Mammary epithelial cell (primary cell): ENCODE measurements at regions of chr2 and their contacts with region 1.

Region 1: GRCh38 chr2:202375609-202376408 is at the start of gene BMPR2:
- DNase-seq: peak; percentile 88
- H3K4me3 ChIP-seq: peak within 1 kb of the TSS; percentile 89 to 97 (median 92)
- H3K27ac ChIP-seq: peak within 1 kb of the TSS; percentile 89
- H3K4me1 ChIP-seq: peaks cover 15% of the 10 kb centered on the region
- H3K27me3 ChIP-seq: no peaks in the 10 kb centered on the region
- CTCF ChIP-seq: no peak
- total RNA-seq, gene BMPR2: 46.5 to 56.0 TPM

Region 2: DNA sequence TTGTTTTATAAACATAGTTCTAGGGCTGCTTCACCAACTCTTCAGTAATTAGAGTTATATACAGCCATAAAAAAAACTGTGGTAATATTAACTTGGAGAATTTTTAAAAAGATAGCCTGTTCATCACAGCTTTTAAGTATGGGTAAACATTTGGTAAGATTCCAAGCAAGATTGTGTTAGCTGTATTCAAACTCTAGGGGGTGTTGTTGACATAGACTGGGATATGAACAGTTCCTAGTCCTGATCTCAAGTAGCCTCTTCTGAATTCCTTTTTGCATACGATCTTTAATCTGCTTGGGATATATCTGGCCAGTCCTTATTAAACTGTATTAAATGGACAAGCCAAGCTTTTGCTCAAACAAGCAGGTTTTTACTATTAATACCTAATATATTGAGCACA is 96.9 kb before region 1 on chr2:
- CTCF ChIA-PET with region 1: no interaction called
- dilution Hi-C with region 1: no loop called
- in situ Hi-C with region 1: no loop called
- intact Hi-C with region 1: loop called (anchors 5 kb)
- DNase-seq: peak; percentile 41
- H3K4me3 ChIP-seq: no peak overlapping the region
- H3K27ac ChIP-seq: peak overlapping the region; percentile 75
- H3K4me1 ChIP-seq: peaks cover 28% of the 10 kb centered on the region
- H3K27me3 ChIP-seq: no peaks in the 10 kb centered on the region
- CTCF ChIP-seq: peak; percentile 52 to 66

Region 3: GRCh38 chr2:202317080-202317857 is 58.5 kb before region 1 on chr2:
- CTCF ChIA-PET with region 1: no interaction called
- dilution Hi-C with region 1: no loop called
- in situ Hi-C with region 1: no loop called
- intact Hi-C with region 1: loop called (anchors 5 kb)
- DNase-seq: peak; percentile 58
- H3K4me3 ChIP-seq: no peak overlapping the region
- H3K27ac ChIP-seq: no peak overlapping the region
- H3K4me1 ChIP-seq: peaks cover 10% of the 10 kb centered on the region
- H3K27me3 ChIP-seq: no peaks in the 10 kb centered on the region
- CTCF ChIP-seq: no peak

Region 4: DNA sequence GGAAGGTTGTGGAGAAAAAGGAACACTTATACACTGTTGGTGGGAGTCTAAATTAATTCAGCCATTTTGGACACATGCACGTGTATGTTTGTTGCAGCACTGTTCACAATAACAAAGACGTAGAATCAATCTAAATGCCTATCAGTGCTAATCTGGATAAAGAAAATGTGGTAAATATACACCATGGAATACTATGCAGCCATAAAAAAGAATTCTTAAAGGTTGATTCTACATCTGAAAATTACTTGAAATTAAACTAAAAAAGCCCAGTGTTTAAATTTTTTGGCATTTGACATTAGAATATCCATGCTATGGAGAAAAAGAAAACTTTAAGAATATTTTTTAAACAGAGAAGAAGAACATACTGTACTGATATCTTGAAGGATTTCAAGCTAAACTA is 84.3 kb after region 1 on chr2:
- CTCF ChIA-PET with region 1: no interaction called
- dilution Hi-C with region 1: no loop called
- in situ Hi-C with region 1: no loop called
- intact Hi-C with region 1: loop called (anchors 5 kb)
- DNase-seq: no peak
- H3K4me3 ChIP-seq: no peak overlapping the region
- H3K27ac ChIP-seq: no peak overlapping the region
- H3K4me1 ChIP-seq: no peaks in the 10 kb centered on the region
- H3K27me3 ChIP-seq: no peaks in the 10 kb centered on the region
- CTCF ChIP-seq: no peak

Region 5: DNA sequence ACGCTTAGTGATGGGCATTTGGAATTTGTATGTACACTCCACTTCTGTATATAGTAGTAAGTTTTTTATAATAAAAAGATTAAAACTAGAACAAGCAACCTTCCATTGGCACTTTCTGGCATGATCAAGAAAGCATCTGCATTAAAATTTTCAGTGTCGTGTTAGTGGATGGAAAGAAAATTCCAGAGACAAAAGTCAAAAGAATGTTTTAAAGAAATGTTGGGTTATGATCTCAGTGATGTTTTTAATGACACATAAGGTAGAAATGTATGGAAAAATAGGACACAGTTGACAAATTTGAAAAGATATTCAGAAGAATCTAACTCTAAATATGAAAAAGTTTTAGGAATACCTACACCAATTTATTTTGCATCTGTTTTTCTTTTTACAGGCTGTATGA is 132.9 kb after region 1 on chr2:
- CTCF ChIA-PET with region 1: no interaction called
- dilution Hi-C with region 1: no loop called
- in situ Hi-C with region 1: no loop called
- intact Hi-C with region 1: loop called (anchors 5 kb)
- DNase-seq: no peak
- H3K4me3 ChIP-seq: no peak overlapping the region
- H3K27ac ChIP-seq: no peak overlapping the region
- H3K4me1 ChIP-seq: peaks cover 4% of the 10 kb centered on the region
- H3K27me3 ChIP-seq: no peaks in the 10 kb centered on the region
- CTCF ChIP-seq: no peak

Region 6: DNA sequence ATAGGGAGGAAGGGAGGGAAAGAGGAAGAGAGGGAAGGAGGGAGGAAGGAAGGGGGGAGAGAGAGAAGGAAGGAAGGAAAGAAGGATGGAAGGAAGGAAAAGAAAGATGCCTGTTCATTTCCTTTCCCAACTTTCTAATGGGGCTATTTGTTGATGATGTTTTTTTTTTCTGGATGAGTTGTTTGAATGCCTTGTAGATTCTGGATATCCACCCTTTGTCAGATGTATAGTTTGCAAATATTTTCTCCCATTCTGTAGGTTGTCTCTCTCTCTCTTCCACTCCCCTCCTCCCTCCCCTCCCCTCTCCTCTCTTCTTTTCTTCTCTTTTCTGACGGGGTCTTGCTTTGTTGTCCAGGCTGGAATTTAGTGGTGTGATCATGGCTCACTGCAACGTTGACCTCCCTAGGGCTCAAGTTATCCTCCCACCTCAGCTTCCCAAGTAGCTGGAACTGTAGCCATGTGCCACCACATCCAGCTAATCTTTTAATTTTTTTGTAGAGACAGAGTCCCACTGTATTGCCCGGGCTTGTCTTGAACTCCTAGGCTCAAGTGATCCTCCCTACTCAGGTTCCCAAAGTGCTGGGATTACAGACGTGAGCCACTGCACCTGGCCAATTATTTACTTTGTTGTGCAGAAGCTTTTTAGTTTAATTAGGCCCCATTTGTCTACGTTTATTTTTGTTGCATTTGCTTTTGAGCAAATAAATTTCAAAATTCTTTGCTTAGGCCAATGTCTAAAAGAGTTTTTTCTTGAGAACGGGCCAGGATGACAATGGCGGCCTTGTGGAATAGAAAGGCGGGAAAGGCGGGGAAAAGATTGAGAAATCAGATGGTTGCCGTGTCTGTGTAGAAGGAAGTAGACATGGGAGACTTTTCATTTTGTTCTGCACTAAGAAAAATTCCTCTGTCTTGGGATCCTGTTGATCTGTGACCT is 201.7 kb after region 1 on chr2:
- CTCF ChIA-PET with region 1: no interaction called
- dilution Hi-C with region 1: no loop called
- in situ Hi-C with region 1: no loop called
- intact Hi-C with region 1: loop called (anchors 5 kb)
- DNase-seq: no peak
- H3K4me3 ChIP-seq: no peak overlapping the region
- H3K27ac ChIP-seq: no peak overlapping the region
- H3K4me1 ChIP-seq: no peaks in the 10 kb centered on the region
- H3K27me3 ChIP-seq: no peaks in the 10 kb centered on the region
- CTCF ChIP-seq: no peak